ENCODE measurements at regions of chr9 and their contacts with region 1.

Region 1: DNA sequence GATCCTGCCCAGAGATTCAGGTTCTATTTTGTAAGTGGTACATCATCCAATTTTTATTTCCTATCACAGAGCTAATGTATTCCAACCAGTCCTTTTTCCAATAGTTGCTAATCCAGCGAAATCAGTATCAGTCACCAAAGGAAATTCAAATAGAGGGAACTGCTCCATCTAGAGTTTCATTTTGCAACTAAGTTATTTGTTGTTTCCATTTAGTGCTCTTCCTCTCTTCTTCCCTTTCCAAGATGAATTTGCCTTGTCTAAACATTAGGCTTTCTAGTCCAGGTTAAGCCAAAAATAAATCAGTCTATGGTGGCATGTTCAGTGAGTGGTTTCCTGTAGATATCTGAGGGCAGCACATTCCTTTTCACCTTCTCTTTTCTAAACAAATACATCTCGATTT is 79.8 kb upstream of the SPATA31D4 start:
- DNase-seq: no peak
- H3K4me3 ChIP-seq: no peak overlapping the region
- H3K27ac ChIP-seq: no peak overlapping the region
- H3K4me1 ChIP-seq: no peaks in the 10 kb centered on the region
- H3K27me3 ChIP-seq: no peaks in the 10 kb centered on the region
- CTCF ChIP-seq: peak in 2 of 3 donors; percentile 30 to 35
- EP300 ChIP-seq: no peak
- POLR2A ChIP-seq: no peak

Region 2: DNA sequence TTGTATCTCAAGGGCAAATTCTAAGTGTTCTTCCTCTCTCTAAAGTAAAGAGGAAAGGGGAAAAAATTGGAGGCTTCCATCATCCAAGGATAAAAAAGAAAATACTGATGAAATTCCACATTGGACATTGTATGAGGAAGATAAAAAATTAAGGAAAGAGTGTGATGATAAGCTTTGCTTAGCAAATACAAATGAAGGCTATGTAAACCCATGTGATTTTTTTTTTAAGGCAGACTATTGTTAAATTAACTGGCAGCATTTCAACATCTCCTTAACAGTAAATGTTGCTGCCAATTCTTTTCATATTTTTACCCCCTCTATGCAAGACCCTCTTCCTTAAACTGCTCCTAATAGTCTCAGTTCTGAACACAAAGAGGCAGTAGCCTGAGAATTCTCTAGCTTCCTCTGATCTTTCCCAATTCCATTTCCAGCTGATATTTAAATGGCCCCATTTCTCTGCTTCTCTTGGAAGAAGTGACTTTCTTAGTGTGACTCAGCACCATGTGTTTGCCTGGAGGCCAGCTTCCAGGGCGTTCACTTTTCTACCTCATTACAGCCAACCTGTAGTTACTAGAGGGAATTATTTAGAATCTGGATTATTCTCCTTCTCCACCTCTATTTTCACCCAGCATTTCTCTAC is 318.8 kb before region 1 on chr9:
- intact Hi-C with region 1: loop called in 2 of 4 experiments (anchors 10 kb)
- DNase-seq: no peak
- H3K4me3 ChIP-seq: no peak overlapping the region
- H3K27ac ChIP-seq: no peak overlapping the region
- H3K4me1 ChIP-seq: no peaks in the 10 kb centered on the region
- H3K27me3 ChIP-seq: no peaks in the 10 kb centered on the region
- CTCF ChIP-seq: no peak
- EP300 ChIP-seq: no peak
- POLR2A ChIP-seq: no peak

Region 3: DNA sequence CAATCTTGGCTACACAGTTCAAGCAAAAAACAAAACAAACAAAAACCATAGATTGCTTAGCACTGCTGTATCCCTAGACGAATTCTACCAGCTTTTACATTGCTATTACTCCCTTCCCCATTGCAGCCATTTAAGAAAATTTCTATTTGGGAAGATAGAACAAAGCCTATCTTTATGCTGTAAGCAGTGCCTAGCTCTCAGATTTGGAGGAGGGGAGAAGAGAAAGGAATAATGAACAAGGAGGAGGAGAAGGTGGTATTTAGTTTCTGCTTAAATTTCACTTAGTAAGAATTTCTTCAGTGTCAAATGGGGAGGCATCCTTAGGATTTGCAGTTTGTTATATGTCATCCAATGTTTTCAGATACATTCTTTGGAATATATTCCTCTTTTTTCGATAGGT is 142.9 kb before region 1 on chr9:
- intact Hi-C with region 1: no loop called
- DNase-seq: no peak
- H3K4me3 ChIP-seq: no peak overlapping the region
- H3K27ac ChIP-seq: no peak overlapping the region
- H3K4me1 ChIP-seq: no peaks in the 10 kb centered on the region
- H3K27me3 ChIP-seq: no peaks in the 10 kb centered on the region
- CTCF ChIP-seq: no peak
- EP300 ChIP-seq: no peak
- POLR2A ChIP-seq: no peak

Region 4: GRCh38 chr9:82080265-82080664 is 231.8 kb after region 1 on chr9:
- intact Hi-C with region 1: no loop called
- DNase-seq: no peak
- H3K4me3 ChIP-seq: no peak overlapping the region
- H3K27ac ChIP-seq: no peak overlapping the region
- H3K4me1 ChIP-seq: no peaks in the 10 kb centered on the region
- H3K27me3 ChIP-seq: no peaks in the 10 kb centered on the region
- CTCF ChIP-seq: no peak
- EP300 ChIP-seq: no peak
- POLR2A ChIP-seq: no peak

Region 5: DNA sequence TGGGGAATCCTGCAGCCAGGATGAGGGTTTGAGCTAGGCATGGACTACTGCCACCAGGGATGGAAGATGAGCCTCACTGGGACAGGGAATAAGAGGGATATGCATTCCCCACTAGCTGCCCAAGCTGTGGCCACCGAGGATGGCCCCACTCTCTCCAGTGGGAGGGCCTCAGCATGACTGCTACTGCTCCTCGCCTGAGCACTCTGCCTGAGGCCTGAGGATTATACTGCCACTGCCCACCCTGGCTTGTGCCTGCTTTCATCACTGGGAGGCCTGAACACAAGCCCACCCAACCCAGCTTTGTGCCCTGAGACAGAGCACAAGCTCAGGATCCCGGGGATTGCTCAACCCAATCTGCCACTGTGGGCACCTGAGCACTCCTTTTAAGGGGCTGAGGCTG is 788.9 kb after region 1 on chr9:
- intact Hi-C with region 1: no loop called
- DNase-seq: no peak
- H3K4me3 ChIP-seq: no peak overlapping the region
- H3K27ac ChIP-seq: no peak overlapping the region
- H3K4me1 ChIP-seq: no peaks in the 10 kb centered on the region
- H3K27me3 ChIP-seq: no peaks in the 10 kb centered on the region
- CTCF ChIP-seq: no peak
- EP300 ChIP-seq: no peak
- POLR2A ChIP-seq: no peak

Measured in ovary (tissue), 10 donors.